PC-3 (cell line): ENCODE measurements at regions of chr5 and their contacts with region 1.

Region 1: DNA sequence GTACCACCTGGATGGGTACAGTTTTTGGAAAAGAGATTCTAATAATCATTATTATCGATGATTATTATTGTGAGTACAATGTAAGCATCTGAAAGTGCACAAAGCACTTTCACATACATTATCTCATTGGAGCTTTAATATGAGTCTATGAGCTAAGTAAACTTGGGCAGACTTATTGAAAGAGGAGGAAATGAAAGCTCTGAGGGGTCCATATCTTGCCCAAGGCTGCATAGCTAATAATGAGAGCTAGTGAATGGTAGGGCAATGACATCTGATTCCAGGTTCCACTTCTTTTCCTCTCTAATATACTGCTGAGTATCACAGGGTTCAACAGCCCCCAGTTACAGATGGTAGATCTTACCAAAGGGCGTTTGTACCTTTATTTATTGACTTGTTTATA is 26.1 kb downstream of the TIMD4 start:
- DNase-seq: no peak
- ATAC-seq: no peak
- H3K4me3 ChIP-seq: no peak overlapping the region
- H3K27ac ChIP-seq: no peak overlapping the region
- H3K4me1 ChIP-seq: no peaks in the 10 kb centered on the region
- H3K27me3 ChIP-seq: no peaks in the 10 kb centered on the region
- CTCF ChIP-seq: no peak

Region 2: DNA sequence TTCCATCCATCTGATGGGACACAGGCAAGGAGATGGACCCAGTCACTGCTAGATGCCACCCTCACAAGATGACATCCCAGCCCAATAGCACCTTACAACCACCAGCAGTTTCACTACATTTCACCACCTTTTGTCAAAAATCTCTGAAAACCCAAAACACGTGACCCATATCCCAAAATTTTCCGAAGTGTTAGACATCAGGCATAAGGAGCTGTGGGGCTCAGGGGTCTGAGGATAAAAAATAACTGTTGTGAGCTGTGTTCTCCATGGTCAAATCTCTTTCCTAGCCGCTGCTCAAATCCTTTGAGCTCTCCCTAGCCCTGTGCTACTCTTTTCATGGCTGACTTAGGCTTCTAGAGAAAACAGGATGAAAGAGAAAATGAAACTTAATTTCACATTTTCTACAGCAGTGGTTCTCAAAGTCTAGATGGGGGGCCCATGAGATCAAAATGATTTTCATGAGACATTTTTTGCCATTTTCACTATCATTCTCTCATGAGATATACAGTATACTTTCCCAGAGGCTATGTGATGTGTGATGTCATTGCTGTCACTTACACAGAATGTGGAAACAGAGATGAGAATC is 14.7 kb before region 1 on chr5:
- CTCF ChIA-PET with region 1: no interaction called
- POLR2A ChIA-PET with region 1: interaction called, 24 read pairs
- intact Hi-C with region 1: no loop called
- DNase-seq: no peak
- ATAC-seq: no peak
- H3K4me3 ChIP-seq: no peak overlapping the region
- H3K27ac ChIP-seq: no peak overlapping the region
- H3K4me1 ChIP-seq: no peaks in the 10 kb centered on the region
- H3K27me3 ChIP-seq: 0 out of 2 replicates have a peak, but pooled peaks cover 4% of the 10 kb centered on the region
- CTCF ChIP-seq: no peak